A673 (cell line): ENCODE measurements at regions of chr17 and their contacts with region 1.

Region 1: DNA sequence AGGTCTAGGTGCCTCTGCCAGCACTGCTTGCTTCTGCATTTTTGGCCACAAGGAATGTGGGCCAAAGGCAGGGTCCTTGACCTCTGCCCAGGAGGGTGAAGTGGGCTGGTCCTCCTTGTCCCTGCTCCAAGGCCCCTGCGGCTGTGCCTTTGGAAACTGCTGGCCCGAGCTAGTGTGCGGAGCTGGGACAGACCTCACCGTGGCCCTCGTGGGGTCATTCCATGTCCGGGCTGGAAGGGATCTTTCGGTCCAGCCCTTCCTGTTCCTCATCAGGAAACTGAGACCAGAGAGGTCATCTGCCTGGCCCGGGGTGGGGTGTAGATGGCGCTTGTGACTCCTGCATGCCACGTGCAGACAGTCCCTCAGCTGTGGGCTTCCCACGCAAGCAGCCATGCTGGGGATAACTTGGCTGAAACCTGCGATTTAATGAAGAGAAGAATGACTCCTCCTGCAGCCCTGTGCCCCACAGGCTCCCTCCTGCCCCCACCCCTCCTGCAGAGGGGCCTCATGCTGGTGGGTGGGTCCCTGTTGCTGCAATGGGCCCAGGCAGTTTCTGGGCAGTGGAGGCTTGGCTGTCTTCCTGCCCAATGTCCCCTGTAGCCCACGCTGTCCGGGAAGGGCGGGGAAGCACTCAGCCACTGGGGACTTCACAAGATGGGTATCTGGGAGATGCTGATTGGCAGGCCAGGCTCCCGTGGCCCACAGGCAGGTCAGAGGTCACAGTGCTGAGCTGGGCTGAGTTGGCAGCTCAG is 245.2 kb downstream of the SEC14L1 start:
- DNase-seq: no peak
- H3K4me3 ChIP-seq: no peak overlapping the region
- H3K27ac ChIP-seq: no peak overlapping the region
- H3K4me1 ChIP-seq: peaks cover 30% of the 10 kb centered on the region
- H3K27me3 ChIP-seq: no peaks in the 10 kb centered on the region
- CTCF ChIP-seq: no peak

Region 2: GRCh38 chr17:76166168-76166567 is 1219.8 kb before region 1 on chr17:
- CTCF ChIA-PET with region 1: no interaction called
- POLR2A ChIA-PET with region 1: interaction called, 32 read pairs
- intact Hi-C with region 1: no loop called
- DNase-seq: no peak
- H3K4me3 ChIP-seq: no peak overlapping the region
- H3K27ac ChIP-seq: no peak overlapping the region
- H3K4me1 ChIP-seq: no peaks in the 10 kb centered on the region
- H3K27me3 ChIP-seq: no peaks in the 10 kb centered on the region
- CTCF ChIP-seq: no peak